Heart right ventricle (tissue), 16 donors: ENCODE measurements at regions of chr11 and their contacts with region 1.

Region 1: GRCh38 chr11:100923555-100923954 is 206.1 kb downstream of the PGR start:
- DNase-seq: no peak
- ATAC-seq: peak in 5 of 8 donors; percentile 16 to 72 (median 58)
- H3K4me3 ChIP-seq: no peak overlapping the region
- H3K27ac ChIP-seq: peak overlapping the region in 5 of 10 donors; percentile 21 to 54 (median 36)
- H3K4me1 ChIP-seq: peaks cover 0 to 15% (median 0%) of the 10 kb centered on the region in 9 donors
- H3K27me3 ChIP-seq: no peaks in the 10 kb centered on the region
- CTCF ChIP-seq: no peak

Region 2: DNA sequence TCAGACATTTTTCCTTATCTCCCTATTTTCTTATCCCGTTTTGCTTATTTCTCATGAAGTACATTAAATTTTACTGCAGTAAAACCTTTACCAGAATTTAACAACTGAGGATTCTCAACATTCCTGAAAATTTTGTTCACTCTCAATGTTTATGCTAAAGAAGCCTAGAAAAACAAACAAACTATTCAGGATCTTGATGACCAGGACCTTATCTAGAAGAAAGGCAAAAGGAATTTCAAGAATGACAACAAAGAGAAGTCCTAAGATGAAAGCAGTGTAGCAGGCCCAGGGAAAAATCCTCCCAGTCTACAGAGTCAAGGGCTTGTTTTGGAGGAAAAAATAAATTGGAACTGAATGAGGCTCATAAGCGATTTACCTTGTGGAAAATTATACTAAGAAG is 519.7 kb before region 1 on chr11:
- intact Hi-C with region 1: no loop called
- DNase-seq: no peak
- ATAC-seq: no peak
- H3K4me3 ChIP-seq: no peak overlapping the region
- H3K27ac ChIP-seq: no peak overlapping the region
- H3K4me1 ChIP-seq: no peaks in the 10 kb centered on the region
- H3K27me3 ChIP-seq: no peaks in the 10 kb centered on the region
- CTCF ChIP-seq: no peak

Region 3: DNA sequence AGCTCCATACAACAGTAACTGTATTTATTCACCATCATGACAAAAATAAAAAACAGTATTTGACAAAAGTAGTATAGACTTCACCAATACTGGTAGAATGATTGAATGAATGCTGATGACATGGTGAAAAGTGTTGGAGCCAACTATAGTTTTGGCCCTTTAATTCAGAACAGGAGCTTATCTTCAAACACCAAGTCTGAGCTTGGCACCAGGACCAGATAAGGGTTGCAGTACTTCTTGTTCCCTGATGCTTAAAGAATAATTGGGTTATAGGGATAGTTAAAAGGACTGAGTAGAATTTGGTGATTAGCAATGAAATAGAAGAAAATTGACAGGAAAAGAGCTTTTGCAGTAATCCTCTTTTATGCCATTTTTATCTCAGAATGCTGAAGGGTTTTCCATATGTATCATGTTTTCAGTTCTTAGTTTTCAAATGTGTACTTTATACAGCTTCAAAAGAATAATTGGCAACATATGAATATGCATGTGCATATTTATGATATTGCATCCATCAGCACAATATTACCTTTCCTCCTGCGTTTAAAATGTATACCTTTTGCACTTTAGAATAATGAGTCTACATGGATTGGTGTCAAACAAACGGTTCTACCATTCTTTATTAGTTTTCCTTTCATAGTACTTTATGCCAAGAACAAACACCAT is 450.7 kb before region 1 on chr11:
- intact Hi-C with region 1: no loop called
- DNase-seq: no peak
- ATAC-seq: peak in 2 of 8 donors; percentile 59 to 63
- H3K4me3 ChIP-seq: no peak overlapping the region
- H3K27ac ChIP-seq: no peak overlapping the region
- H3K4me1 ChIP-seq: peaks cover 0 to 9% (median 0%) of the 10 kb centered on the region in 9 donors
- H3K27me3 ChIP-seq: no peaks in the 10 kb centered on the region
- CTCF ChIP-seq: no peak

Region 4: DNA sequence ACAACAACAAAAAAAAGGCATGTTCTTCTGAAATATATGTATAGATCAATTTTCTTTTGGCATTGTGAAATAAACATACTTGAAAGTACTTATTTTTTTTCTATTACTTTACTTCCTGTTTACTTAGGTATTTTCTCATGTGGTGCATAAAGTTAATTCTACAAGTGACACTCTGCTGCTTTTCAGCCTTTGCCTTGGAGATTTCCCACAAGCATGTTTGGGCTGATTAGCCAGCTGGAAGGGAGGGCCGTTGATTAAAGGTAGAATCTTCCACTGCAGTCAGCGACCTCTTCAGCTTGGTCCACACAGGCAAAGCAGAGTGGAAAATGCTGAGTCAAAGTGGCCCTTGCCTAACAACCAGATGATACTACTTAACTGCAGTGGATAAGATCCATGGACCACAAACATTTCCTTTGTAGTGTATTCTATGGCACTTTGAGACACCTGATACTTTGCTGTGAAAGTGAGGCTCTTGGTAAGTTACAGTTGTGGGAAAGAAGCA is 60.4 kb before region 1 on chr11:
- intact Hi-C with region 1: loop called in 3 of 10 experiments (anchors 5 kb)
- DNase-seq: peak in 1 of 2 donors; percentile 53
- ATAC-seq: peak; percentile 78 to 93 (median 82)
- H3K4me3 ChIP-seq: no peak overlapping the region
- H3K27ac ChIP-seq: peak overlapping the region in 5 of 10 donors; percentile 0 to 39 (median 22)
- H3K4me1 ChIP-seq: peaks cover 0 to 12% (median 9%) of the 10 kb centered on the region in 9 donors
- H3K27me3 ChIP-seq: no peaks in the 10 kb centered on the region
- CTCF ChIP-seq: no peak

Region 5: DNA sequence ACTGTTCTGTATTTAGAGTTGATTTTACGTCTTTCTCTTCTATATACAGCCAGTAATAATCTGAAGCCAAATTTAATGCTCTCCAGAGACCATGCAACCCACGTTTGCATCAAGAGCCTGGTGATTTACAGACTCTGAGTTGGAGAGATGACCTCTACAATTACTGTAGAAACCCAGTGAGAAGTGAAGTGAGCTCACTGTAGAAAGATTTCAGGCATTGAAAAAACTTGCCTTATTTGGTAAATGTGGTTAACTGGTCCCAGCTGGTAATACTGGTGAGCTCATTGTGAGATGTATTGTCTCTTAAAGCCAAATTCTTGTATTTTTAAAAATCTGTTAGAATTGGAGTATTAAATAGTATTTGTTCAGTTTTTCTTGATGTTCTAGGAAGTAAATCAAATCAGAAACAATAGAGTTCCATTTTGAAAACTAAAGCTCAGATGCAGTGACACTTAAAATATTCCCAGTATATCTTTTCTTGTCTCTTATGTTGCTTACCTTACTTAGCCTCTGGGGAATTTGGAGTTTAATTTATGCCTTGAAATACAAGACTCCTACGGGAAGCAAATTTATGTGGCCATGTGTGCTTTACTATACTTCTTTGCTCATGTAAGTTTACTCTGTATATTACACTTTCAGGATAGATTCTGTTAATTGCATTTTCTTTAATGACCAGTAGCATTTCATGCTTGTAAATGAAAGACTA is 46.6 kb before region 1 on chr11:
- intact Hi-C with region 1: loop called in 1 of 10 experiments (anchors 5 kb)
- DNase-seq: peak in 1 of 2 donors; percentile 20
- ATAC-seq: peak in 7 of 8 donors; percentile 77 to 91 (median 85)
- H3K4me3 ChIP-seq: no peak overlapping the region
- H3K27ac ChIP-seq: peak overlapping the region in 7 of 10 donors; percentile 64 to 80 (median 78)
- H3K4me1 ChIP-seq: peaks cover 0 to 23% (median 4%) of the 10 kb centered on the region in 9 donors
- H3K27me3 ChIP-seq: no peaks in the 10 kb centered on the region
- CTCF ChIP-seq: no peak

Region 6: GRCh38 chr11:100908746-100909145 is 14.8 kb before region 1 on chr11:
- intact Hi-C with region 1: no loop called
- DNase-seq: no peak
- ATAC-seq: no peak
- H3K4me3 ChIP-seq: no peak overlapping the region
- H3K27ac ChIP-seq: no peak overlapping the region
- H3K4me1 ChIP-seq: no peaks in the 10 kb centered on the region
- H3K27me3 ChIP-seq: no peaks in the 10 kb centered on the region
- CTCF ChIP-seq: no peak